GM10248 (cell line): ENCODE measurements at regions of chr7 and their contacts with region 1.

Region 1: DNA sequence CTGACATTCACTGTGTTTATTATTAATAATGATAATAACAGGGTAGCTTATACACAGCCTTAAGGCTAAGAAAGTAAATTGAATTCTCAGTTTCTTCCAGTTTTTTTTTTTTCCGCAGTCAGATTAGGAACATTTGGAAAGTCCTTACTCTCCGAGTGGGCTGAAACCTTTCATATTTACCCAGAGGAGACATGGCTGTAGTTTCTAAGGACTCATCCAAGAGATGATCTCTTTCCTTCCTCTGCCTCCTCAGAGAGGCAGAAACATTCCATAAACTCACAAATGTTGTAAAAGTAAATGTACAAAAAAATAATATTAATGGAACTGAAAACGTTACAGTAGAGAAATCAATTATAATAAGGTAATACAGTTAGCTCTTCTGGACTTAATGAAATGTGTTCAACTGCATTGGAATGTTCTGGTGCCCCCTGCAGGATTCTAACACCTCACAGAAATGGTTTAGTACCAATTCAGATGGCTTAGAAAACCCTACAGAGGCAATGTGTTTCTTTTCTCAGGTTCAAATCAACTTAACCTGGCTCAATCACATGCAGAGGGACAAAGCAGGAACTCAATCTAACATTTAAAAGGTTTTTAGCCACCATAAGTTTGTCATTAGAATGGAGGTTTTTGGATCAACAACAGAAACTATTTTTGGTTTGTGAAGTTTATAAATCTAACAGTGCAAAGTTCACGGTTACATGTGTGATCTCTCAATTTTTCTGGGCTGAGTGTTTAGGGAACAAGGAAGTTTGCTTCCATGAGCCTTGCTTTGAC is 71.7 kb downstream of the ICA1 start:
- DNase-seq: peak; percentile 55
- CTCF ChIP-seq: peak; percentile 60

Region 2: GRCh38 chr7:7761340-7761980 is 428.8 kb before region 1 on chr7:
- CTCF ChIA-PET with region 1: interaction called, 12 read pairs
- POLR2A ChIA-PET with region 1: no interaction called
- DNase-seq: no peak
- CTCF ChIP-seq: peak; percentile 33

Region 3: GRCh38 chr7:7867846-7868571 is 322.3 kb before region 1 on chr7:
- CTCF ChIA-PET with region 1: no interaction called
- POLR2A ChIA-PET with region 1: no interaction called
- DNase-seq: no peak
- CTCF ChIP-seq: no peak

Region 4: DNA sequence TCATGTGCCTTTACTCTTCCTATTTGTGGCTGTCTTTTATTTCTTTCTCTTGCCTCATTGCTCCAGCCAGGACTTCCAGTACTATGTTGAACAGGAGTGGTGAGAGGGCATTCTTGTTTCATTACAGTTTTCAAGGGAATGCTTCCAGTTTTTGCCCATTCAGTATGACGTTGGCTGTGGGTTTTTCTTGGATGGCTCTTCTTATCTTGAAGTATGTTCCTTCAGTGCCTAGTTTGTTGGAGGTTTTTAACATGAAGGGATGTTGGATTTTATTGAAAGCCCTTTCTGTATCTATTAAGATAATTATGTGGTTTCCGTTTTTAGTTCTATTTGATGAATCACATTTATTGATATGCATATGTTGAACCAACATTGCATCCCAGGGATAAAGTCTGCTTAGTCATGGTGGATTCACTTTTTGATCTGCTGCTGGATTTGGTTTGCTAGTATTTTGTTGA is 124.9 kb before region 1 on chr7:
- CTCF ChIA-PET with region 1: no interaction called
- POLR2A ChIA-PET with region 1: no interaction called
- DNase-seq: no peak
- CTCF ChIP-seq: no peak

Region 5: GRCh38 chr7:8125680-8126444 is 64.4 kb before region 1 on chr7:
- CTCF ChIA-PET with region 1: interaction called, 12 read pairs
- POLR2A ChIA-PET with region 1: no interaction called
- DNase-seq: peak; percentile 63
- CTCF ChIP-seq: peak; percentile 2

Region 6: DNA sequence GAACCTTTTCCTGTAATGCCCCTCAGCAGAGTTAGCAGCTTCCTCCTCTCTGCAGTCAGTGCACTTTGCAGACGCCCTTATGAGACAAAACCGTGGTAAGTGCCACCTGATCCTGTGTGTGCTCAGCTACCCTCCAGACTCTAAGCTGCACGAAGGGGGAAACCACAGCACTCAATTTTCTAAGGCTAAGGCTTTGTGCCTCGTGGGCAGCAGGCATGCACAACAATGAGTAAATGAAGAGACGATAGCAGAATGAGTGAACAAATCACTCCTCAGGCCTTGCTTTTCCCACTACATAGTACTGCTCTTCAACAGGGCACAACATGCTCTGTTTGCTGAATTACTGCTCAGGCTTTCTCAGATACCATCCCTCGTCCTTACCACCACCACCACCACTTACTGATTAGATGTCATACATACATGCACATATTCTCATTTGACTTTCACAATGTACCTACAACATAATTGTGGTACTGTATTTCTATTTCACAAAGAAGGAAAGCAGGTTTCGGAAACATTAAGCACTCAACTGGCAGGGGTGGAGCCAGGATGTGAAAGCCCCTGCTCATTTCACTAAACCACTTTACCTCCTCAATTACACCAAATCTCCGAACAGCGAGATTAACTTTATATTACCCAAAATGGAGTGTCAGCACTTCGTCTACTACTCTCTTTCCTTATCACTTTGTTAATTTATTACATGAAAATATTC is 13.8 kb before region 1 on chr7:
- CTCF ChIA-PET with region 1: interaction called, 50 read pairs
- POLR2A ChIA-PET with region 1: no interaction called
- DNase-seq: peak; percentile 41
- CTCF ChIP-seq: no peak

Region 7: DNA sequence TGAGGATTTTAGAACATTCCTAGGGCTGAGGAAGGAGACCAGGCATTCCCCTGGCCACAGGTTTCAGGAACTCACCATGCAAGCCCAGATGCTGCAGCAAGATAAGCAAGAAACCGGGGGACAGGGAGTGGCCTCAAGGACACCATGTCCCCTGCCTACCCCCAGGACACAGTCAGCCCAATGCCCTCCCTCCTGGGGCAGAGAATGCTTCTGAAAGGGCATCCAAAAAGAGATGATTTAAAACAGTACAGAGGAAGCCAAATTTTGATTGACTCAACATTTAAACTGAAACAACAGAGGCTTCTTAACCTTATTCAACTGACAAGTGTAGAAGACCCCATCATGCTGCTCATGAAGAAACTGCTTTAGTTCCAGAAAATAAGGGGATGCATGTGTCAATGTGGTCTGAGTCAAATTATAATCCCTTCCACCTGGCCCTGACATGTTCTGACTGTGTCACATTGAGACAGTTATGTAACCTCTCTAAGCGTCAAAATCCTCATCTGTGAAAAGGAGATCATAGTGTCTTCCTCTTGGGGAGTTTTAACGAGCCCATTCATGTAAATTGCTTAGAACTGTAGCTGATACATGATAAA is 11.6 kb after region 1 on chr7:
- CTCF ChIA-PET with region 1: interaction called, 18 read pairs
- POLR2A ChIA-PET with region 1: no interaction called
- DNase-seq: no peak
- CTCF ChIP-seq: no peak